GM13977 (cell line): ENCODE measurements at regions of chr1 and their contacts with region 1.

Region 1: DNA sequence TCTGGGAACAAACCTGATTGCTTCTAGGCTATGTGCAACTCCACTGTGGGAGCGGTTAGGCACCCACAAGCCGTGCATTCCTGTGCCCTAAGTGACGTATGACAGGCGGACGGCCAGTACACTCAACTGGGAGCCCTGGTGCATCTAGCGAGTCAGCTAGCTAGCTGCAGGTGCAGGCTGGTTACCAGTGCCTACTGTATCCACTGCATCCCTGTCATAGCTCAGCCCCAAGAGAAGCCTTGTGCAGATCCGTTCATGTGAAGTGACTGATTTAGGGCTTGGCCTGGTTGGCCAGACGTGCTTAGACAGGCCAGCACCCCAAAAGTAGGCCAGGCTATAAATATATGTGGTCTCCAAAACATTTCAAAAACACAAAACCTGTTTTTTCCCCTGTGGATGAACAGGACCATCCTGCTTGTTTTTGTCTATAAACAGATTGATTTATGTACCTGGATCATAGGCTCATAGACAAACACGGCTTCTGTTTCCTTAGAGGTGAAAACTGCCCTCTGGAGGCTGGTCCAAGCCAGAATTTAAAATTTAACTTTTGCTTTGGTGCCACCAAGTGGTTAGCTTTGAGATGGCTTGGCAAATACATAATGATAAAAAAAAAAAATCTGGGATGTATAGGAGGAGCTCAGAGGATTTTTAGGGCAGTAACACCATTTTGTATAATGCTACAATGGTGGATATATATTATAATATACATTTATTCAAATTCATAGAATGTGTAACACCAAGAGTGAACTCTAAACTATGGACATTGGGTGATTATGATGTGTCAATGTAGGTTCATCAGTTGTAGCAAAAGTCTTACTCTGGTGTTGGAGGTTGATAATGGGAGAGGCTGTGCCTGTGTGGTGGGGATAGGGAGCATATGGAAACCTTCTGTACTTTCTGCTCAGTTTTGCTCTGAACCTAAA is 68.5 kb downstream of the GIPC2 start:
- DNase-seq: peak; percentile 58
- CTCF ChIP-seq: peak; percentile 78

Region 2: GRCh38 chr1:77170687-77171086 is 943.6 kb before region 1 on chr1:
- in situ Hi-C with region 1: loop called (anchors 25 kb)
- DNase-seq: no peak
- CTCF ChIP-seq: no peak

Region 3: GRCh38 chr1:77825131-77825709 is 289.1 kb before region 1 on chr1:
- in situ Hi-C with region 1: loop called (anchors 25 kb)
- DNase-seq: peak; percentile 16
- CTCF ChIP-seq: peak; percentile 48

Region 4: GRCh38 chr1:77978969-77979876 is 135.1 kb before region 1 on chr1 and contains the start of gene FUBP1:
- in situ Hi-C with region 1: no loop called
- DNase-seq: peak; percentile 86
- CTCF ChIP-seq: peak; percentile 82